CD4-positive, alpha-beta memory T cell (primary cell): ENCODE measurements at regions of chr4 and their contacts with region 1.

Region 1: DNA sequence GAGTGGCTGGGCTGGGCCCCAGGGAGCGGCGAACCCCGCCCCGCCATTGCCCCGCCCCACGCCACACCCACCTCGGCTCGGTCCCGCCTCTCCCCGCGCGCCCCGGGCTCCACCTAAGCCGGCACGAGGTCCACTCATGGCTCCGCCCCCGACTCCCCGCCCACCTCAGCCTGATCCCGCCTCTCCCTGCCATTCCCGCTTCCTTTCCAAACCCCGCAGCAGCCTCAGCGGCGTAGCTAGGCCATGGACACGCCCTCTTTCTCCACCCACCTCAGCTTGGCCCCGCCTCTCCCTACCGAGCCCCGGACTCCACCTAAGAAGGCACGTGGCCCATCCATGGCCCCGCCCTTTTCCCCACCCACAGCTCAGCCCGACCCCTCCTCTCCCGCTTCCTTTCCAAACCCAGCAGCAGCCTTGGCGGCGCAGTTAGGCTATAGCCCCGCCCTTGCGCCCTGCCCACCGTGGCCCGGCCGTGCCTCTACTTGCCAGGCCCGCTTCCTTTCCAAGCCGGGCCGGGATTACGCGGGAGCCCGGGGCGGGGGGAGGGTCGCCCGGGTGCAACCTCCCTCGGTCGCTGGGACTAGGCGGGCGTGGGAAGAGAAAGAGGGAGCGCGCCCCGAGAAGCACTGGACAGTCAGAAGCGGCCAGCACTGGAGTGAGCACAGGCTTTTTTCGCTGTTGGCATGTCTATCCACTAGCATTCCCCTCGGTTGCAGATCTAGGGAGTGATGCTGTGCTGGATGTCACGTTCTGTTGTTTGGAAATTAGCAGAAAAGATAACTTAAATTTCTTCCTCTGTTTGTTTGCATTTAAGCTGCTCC is at the start of gene RELL1:
- DNase-seq: peak; percentile 98 to 99 (median 98)
- H3K4me3 ChIP-seq: peak within 1 kb of the TSS; percentile 18 to 72
- H3K4me3 Mint-ChIP-seq: peak within 1 kb of the TSS; percentile 91 to 98 (median 95)
- H3K27ac ChIP-seq: peak within 1 kb of the TSS; percentile 91
- H3K27ac Mint-ChIP-seq: peak within 1 kb of the TSS; percentile 97 to 99 (median 98)
- H3K4me1 ChIP-seq: peaks cover 41% of the 10 kb centered on the region
- H3K4me1 Mint-ChIP-seq: peaks cover 26 to 47% (median 35%) of the 10 kb centered on the region in 4 donors
- H3K27me3 ChIP-seq: no peaks in the 10 kb centered on the region
- H3K27me3 Mint-ChIP-seq: no peaks in the 10 kb centered on the region
- total RNA-seq, gene RELL1: 34.9 to 36.9 TPM

Region 2: GRCh38 chr4:36385951-36386571 is 1300.5 kb before region 1 on chr4:
- CTCF ChIA-PET with region 1: no interaction called
- POLR2A ChIA-PET with region 1: no interaction called
- intact Hi-C with region 1: loop called (anchors 10 kb)
- DNase-seq: peak; percentile 75 to 83 (median 79)
- H3K4me3 ChIP-seq: no peak overlapping the region
- H3K4me3 Mint-ChIP-seq: peak overlapping the region; percentile 18 to 85 (median 64)
- H3K27ac ChIP-seq: peak overlapping the region; percentile 39
- H3K27ac Mint-ChIP-seq: peak overlapping the region; percentile 78 to 99 (median 96)
- H3K4me1 ChIP-seq: peaks cover 23% of the 10 kb centered on the region
- H3K4me1 Mint-ChIP-seq: peaks cover 20 to 32% (median 23%) of the 10 kb centered on the region in 4 donors
- H3K27me3 ChIP-seq: no peaks in the 10 kb centered on the region
- H3K27me3 Mint-ChIP-seq: no peaks in the 10 kb centered on the region

Region 3: DNA sequence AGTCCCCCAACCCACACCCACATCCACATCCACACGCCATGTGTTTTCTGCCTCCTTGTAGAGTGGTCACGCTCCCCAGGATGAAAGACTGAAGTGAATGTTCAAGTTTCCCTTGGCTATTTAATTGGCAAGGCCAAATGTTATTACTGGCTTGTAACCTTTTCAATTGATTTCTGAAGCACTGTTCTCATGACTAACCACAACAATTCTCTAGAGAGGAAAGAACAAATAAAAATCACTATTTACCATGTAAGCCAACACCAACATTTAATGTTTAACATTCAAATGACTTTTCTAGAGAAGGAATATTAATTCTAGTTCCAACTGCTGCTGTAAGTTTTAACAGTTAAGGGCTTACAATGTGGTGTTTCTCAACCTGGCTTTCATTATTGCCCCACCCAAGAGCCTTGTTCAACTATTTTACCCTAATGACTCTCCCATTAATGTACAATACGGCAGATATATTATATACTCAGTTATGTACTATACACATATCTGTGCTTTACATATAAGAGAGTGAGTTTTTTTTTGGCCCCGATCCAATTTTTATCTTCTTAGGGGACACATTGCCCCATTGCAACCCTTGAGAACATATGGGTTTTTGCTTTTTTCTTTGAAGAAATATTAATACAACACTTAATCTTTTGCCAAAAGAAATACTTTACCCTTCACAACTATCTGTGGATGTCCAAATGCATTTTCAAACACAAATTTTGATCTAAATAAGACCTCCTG is 46.9 kb before region 1 on chr4:
- CTCF ChIA-PET with region 1: no interaction called
- POLR2A ChIA-PET with region 1: no interaction called
- intact Hi-C with region 1: no loop called
- DNase-seq: no peak
- H3K4me3 ChIP-seq: no peak overlapping the region
- H3K4me3 Mint-ChIP-seq: no peak overlapping the region
- H3K27ac ChIP-seq: no peak overlapping the region
- H3K27ac Mint-ChIP-seq: peak overlapping the region in 2 of 7 donors; percentile 14 to 63
- H3K4me1 ChIP-seq: no peaks in the 10 kb centered on the region
- H3K4me1 Mint-ChIP-seq: peaks cover 0 to 8% (median 4%) of the 10 kb centered on the region in 4 donors
- H3K27me3 ChIP-seq: no peaks in the 10 kb centered on the region
- H3K27me3 Mint-ChIP-seq: no peaks in the 10 kb centered on the region

Region 4: GRCh38 chr4:37653601-37654000 is 33.0 kb before region 1 on chr4:
- CTCF ChIA-PET with region 1: no interaction called
- POLR2A ChIA-PET with region 1: no interaction called
- intact Hi-C with region 1: loop called (anchors 5 kb)
- DNase-seq: no peak
- H3K4me3 ChIP-seq: no peak overlapping the region
- H3K4me3 Mint-ChIP-seq: no peak overlapping the region
- H3K27ac ChIP-seq: no peak overlapping the region
- H3K27ac Mint-ChIP-seq: peak overlapping the region in 1 of 7 donors; percentile 11
- H3K4me1 ChIP-seq: no peaks in the 10 kb centered on the region
- H3K4me1 Mint-ChIP-seq: peaks cover 12 to 46% (median 29%) of the 10 kb centered on the region in 4 donors
- H3K27me3 ChIP-seq: no peaks in the 10 kb centered on the region
- H3K27me3 Mint-ChIP-seq: no peaks in the 10 kb centered on the region

Region 5: GRCh38 chr4:37715889-37716402 is 29.4 kb after region 1 on chr4:
- CTCF ChIA-PET with region 1: no interaction called
- POLR2A ChIA-PET with region 1: no interaction called
- intact Hi-C with region 1: no loop called
- DNase-seq: no peak
- H3K4me3 ChIP-seq: no peak overlapping the region
- H3K4me3 Mint-ChIP-seq: no peak overlapping the region
- H3K27ac ChIP-seq: no peak overlapping the region
- H3K27ac Mint-ChIP-seq: no peak overlapping the region
- H3K4me1 ChIP-seq: no peaks in the 10 kb centered on the region
- H3K4me1 Mint-ChIP-seq: peaks cover 0 to 2% (median 0%) of the 10 kb centered on the region in 4 donors
- H3K27me3 ChIP-seq: peaks cover 5% of the 10 kb centered on the region
- H3K27me3 Mint-ChIP-seq: peaks cover 3 to 5% of the 10 kb centered on the region in 2 donors

Region 6: DNA sequence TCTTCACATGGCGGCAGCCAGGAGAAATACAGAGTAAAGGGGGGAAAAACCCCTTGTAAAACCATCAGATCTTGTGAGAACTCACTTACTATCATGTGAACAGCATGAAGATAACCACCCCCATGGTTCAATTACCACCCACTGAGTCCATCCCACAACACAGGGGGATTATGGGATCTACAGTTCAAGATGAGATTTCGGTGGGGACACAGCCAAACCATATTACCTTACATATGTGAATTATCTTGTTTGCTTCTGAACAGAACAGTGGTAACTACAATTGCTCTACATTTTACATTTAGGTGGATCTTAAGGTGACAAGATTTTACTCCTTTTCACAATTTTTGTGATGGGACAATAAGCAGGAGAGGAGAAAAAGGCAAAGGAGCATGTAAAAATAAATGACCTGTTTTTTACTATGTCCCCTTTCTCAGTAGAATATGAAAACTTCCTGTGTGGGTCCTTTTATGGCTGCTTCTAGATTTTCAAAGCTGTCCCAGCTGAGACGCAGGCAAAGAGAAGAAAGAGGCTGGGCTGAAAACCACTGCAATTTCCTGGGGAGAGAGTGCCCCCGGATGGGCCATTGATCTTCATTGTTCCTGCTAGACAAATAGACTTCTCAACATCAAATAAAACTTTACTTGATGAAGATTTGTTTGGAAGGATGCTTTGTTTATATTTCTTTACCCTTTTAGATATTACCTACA is 94.0 kb after region 1 on chr4:
- CTCF ChIA-PET with region 1: interaction called, 7 read pairs
- POLR2A ChIA-PET with region 1: interaction called, 3 read pairs
- intact Hi-C with region 1: loop called (anchors 1 kb)
- DNase-seq: peak; percentile 61 to 79 (median 77)
- H3K4me3 ChIP-seq: no peak overlapping the region
- H3K4me3 Mint-ChIP-seq: peak overlapping the region in 6 of 8 donors; percentile 41 to 76 (median 48)
- H3K27ac ChIP-seq: no peak overlapping the region
- H3K27ac Mint-ChIP-seq: peak overlapping the region; percentile 76 to 97 (median 91)
- H3K4me1 ChIP-seq: peaks cover 20% of the 10 kb centered on the region
- H3K4me1 Mint-ChIP-seq: peaks cover 15 to 27% (median 20%) of the 10 kb centered on the region in 4 donors
- H3K27me3 ChIP-seq: no peaks in the 10 kb centered on the region
- H3K27me3 Mint-ChIP-seq: peaks cover 1% of the 10 kb centered on the region in 2 donors

Region 7: GRCh38 chr4:37891260-37892159 is 204.9 kb after region 1 on chr4:
- CTCF ChIA-PET with region 1: no interaction called
- POLR2A ChIA-PET with region 1: no interaction called
- intact Hi-C with region 1: loop called (anchors 1 kb)
- DNase-seq: peak; percentile 54 to 72 (median 65)
- H3K4me3 ChIP-seq: peak overlapping the region; percentile 69 to 85
- H3K4me3 Mint-ChIP-seq: peak overlapping the region; percentile 93 to 99 (median 97)
- H3K27ac ChIP-seq: peak overlapping the region; percentile 61
- H3K27ac Mint-ChIP-seq: peak overlapping the region; percentile 90 to 98 (median 96)
- H3K4me1 ChIP-seq: peaks cover 33% of the 10 kb centered on the region
- H3K4me1 Mint-ChIP-seq: peaks cover 20 to 47% (median 40%) of the 10 kb centered on the region in 4 donors
- H3K27me3 ChIP-seq: no peaks in the 10 kb centered on the region
- H3K27me3 Mint-ChIP-seq: no peaks in the 10 kb centered on the region

Region 8: DNA sequence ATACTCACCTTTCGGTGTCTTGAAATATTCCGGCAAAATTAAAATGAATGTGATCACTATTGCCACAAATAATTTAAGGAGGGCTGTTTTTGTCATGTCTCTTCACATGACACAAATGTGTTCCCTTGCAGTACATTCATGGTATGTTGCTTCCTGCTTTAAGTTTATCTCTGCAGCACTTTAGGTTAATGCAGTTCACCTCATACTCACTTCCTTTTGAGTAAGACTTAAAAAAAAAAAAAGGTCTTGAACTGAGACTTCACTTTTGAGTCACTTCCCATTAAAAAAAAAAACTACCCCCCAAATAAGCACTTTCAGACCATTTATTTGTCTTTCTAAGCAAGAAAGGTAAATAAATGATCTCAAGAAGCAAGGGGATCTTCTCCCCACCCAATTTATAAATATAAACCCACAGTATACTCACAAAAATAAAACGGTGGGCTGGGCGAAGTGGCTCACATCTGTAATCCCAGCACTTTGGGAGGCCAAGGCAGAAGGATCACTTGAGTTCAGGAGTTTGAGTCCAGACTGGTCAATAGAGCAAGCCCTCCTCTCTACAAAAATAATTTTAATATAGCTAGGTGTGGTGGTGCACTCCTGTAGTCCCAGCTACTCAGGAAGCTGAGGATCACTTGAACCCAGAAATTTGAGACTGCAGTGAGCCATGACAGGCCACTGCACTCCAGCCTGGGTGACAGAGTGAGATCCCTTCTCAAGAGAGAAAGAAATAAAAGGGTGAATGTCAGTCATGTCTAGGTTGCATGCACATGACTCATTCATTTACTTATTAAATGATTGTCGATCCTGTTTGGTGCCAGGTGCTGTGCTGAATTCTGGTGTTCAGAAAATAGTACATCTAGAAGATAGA is 1345.9 kb after region 1 on chr4 and contains the start of gene TMEM156:
- CTCF ChIA-PET with region 1: no interaction called
- POLR2A ChIA-PET with region 1: interaction called, 3 read pairs
- intact Hi-C with region 1: loop called (anchors 5 kb)
- DNase-seq: peak; percentile 65 to 81 (median 70)
- H3K4me3 ChIP-seq: peak within 1 kb of the TSS; percentile 51 to 65
- H3K4me3 Mint-ChIP-seq: peak within 1 kb of the TSS; percentile 75 to 93 (median 89)
- H3K27ac ChIP-seq: peak within 1 kb of the TSS; percentile 68
- H3K27ac Mint-ChIP-seq: peak within 1 kb of the TSS; percentile 85 to 97 (median 93)
- H3K4me1 ChIP-seq: peaks cover 43% of the 10 kb centered on the region
- H3K4me1 Mint-ChIP-seq: peaks cover 20 to 55% (median 36%) of the 10 kb centered on the region in 4 donors
- H3K27me3 ChIP-seq: no peaks in the 10 kb centered on the region
- H3K27me3 Mint-ChIP-seq: no peaks in the 10 kb centered on the region
- total RNA-seq, gene TMEM156: 16.8 to 19.3 TPM